Caco-2 (cell line): ENCODE measurements at regions of chr4 and their contacts with region 1.

Region 1: DNA sequence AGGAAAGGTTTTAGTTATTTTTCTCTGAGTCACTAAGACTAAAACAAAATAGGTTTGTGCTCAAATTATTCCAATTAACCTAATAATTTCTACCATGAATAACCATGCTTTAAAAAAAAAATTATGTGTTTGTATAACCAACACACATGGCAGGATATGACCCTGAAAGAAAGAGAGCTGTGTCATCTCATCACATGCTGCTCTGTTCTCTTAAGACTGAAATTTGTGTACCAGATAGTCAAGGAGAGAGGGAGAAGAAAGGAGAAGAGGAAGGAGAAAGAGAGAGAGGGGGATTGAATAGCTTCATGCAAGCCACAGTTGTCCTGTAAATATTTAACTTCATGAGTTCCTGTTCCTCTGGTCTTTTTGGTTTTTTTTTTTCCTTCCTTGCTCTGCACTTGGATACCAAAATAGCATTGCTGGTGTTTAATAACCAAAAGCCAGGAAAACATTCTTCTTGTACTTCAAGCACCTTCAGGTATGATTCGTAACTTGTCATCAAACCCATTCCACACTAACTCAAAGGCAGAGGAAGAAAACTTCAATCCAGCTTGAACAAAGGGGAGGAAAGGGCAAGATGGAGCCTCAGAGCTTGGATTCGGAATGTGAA is 6.4 kb upstream of the PROM1 start:
- DNase-seq: no peak
- H3K4me3 ChIP-seq: no peak overlapping the region
- H3K4me3 Mint-ChIP-seq: no peak overlapping the region
- H3K27ac Mint-ChIP-seq: no peak overlapping the region
- H3K4me1 ChIP-seq: peaks cover 4% of the 10 kb centered on the region; the same call in 1 of the 2 replicates
- H3K4me1 Mint-ChIP-seq: peaks cover 9% of the 10 kb centered on the region
- H3K27me3 ChIP-seq: no peaks in the 10 kb centered on the region
- H3K27me3 Mint-ChIP-seq: no peaks in the 10 kb centered on the region
- CTCF ChIP-seq: no peak

Region 2: DNA sequence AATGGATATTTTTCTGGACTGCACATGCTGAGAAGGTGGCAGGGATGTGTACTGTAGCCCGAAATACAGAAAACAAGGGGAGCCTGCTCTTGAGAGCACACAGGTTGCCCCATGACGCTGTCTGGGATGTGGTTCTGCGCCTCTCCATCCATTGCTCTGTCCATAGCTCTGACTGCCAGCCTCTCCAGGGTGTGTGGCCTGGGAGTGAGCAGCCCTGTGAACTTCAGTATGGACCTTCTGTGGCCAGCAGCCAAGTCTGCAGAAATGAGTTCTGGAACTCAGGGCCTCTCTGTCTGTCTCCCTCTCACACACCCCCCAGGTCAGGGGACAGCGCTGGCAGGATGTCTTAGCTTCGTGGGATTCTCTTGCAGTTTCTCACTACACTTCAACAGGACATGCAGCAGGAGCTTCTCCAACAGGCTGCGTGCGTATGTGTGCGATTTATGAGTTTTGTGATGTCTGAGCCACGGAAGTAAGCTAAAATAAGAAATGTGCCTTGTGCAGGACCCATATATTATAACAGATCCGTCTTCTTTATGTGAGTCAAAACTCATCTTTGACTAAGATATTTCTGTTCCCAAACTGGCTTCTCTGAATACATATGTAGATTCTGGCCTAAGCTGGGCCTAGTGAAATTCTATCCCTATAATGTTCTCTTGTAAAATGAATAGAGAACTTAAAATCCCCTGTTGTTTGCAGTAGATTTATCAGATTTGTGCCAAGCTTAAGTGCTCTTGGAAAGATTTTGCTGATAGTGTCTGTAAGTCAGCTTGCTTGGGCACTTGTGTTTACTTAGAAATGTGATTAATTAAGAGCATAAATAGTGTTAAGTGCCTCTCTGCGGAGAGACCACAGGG is 46.3 kb before region 1 on chr4:
- CTCF ChIA-PET with region 1: no interaction called
- POLR2A ChIA-PET with region 1: no interaction called
- intact Hi-C with region 1: no loop called
- DNase-seq: no peak
- H3K4me3 ChIP-seq: no peak overlapping the region
- H3K4me3 Mint-ChIP-seq: no peak overlapping the region
- H3K27ac Mint-ChIP-seq: no peak overlapping the region
- H3K4me1 ChIP-seq: peaks cover 18% of the 10 kb centered on the region
- H3K4me1 Mint-ChIP-seq: peaks cover 7% of the 10 kb centered on the region
- H3K27me3 ChIP-seq: no peaks in the 10 kb centered on the region
- H3K27me3 Mint-ChIP-seq: no peaks in the 10 kb centered on the region
- CTCF ChIP-seq: no peak

Region 3: GRCh38 chr4:16110891-16111290 is 20.7 kb after region 1 on chr4:
- CTCF ChIA-PET with region 1: no interaction called
- POLR2A ChIA-PET with region 1: no interaction called
- intact Hi-C with region 1: loop called (anchors 2 kb)
- DNase-seq: no peak
- H3K4me3 ChIP-seq: no peak overlapping the region
- H3K4me3 Mint-ChIP-seq: no peak overlapping the region
- H3K27ac Mint-ChIP-seq: no peak overlapping the region
- H3K4me1 ChIP-seq: peaks cover 12% of the 10 kb centered on the region
- H3K4me1 Mint-ChIP-seq: peaks cover 7% of the 10 kb centered on the region
- H3K27me3 ChIP-seq: no peaks in the 10 kb centered on the region
- H3K27me3 Mint-ChIP-seq: no peaks in the 10 kb centered on the region
- CTCF ChIP-seq: no peak